BJ (cell line): ENCODE measurements at regions of chr18 and their contacts with region 1.

Region 1: GRCh38 chr18:45621061-45621511 is 5.8 kb downstream of the SLC14A2 start:
- DNase-seq: no peak
- H3K4me3 ChIP-seq: no peak overlapping the region
- H3K27me3 ChIP-seq: peaks cover 5% of the 10 kb centered on the region
- CTCF ChIP-seq: peak; percentile 98

Region 2: DNA sequence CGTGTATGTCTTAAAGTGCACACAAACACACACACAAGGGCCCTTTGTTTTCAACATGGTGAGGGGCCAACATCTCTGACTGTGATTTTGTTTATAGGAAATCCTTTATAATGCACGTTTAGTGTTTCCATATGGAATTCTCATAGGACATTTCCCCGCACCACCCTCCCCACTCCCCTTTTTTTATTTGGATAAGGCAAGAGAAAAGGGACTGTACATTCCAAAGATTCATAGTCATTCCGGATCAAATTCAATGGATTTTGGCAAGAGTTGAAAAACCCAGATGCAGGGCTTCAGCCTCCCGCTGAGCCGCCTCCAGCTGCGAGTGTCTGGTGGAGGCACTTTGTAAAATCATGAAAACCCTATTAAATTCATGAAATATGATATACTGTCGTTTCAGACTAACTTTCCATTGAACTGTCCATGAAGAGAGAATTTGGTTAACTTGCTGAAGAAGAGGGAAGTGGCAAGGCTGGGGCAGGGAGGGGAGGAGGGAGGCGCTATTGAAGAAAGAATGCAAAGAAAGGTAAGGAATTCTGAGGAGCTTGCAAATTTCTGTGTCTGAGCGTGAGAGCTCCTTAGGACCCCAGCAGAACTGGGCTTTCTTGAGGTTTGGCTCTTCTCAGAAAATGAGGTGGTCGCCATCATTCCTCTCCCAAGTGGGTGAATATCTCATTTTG is 31.6 kb before region 1 on chr18:
- CTCF ChIA-PET with region 1: interaction called, 11 read pairs
- POLR2A ChIA-PET with region 1: no interaction called
- DNase-seq: peak; percentile 85
- H3K4me3 ChIP-seq: no peak overlapping the region
- H3K27me3 ChIP-seq: peaks cover 2% of the 10 kb centered on the region
- CTCF ChIP-seq: no peak

Region 3: DNA sequence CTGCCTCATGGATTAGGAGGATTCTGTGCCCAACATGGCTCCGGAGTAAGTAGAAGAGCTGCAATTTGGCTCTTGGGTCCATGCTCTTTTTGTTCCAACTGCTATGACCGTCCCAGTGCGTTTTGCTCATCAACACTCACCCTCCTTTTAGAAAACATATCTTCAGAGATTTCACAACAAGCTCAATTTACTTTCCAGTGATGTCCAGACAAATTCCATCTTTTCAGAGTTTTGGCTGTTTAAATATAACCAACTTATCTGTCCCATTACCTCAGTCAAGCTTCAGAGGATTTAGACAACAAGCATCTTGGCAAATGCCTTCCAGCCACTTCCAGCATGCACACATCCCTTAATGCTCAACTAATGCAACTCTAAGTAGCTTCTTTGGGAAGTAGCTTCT is 12.7 kb before region 1 on chr18:
- CTCF ChIA-PET with region 1: interaction called, 35 read pairs
- POLR2A ChIA-PET with region 1: no interaction called
- DNase-seq: no peak
- H3K4me3 ChIP-seq: no peak overlapping the region
- H3K27me3 ChIP-seq: peaks cover 12% of the 10 kb centered on the region
- CTCF ChIP-seq: no peak

Region 4: GRCh38 chr18:45637546-45638327 is 16.7 kb after region 1 on chr18:
- CTCF ChIA-PET with region 1: interaction called, 19 read pairs
- POLR2A ChIA-PET with region 1: no interaction called
- DNase-seq: no peak
- H3K4me3 ChIP-seq: no peak overlapping the region
- H3K27me3 ChIP-seq: peaks cover 12% of the 10 kb centered on the region
- CTCF ChIP-seq: no peak

Region 5: GRCh38 chr18:45652303-45653080 is 31.4 kb after region 1 on chr18:
- CTCF ChIA-PET with region 1: interaction called, 91 read pairs
- POLR2A ChIA-PET with region 1: no interaction called
- DNase-seq: no peak
- H3K4me3 ChIP-seq: no peak overlapping the region
- H3K27me3 ChIP-seq: no peaks in the 10 kb centered on the region
- CTCF ChIP-seq: no peak

Region 6: GRCh38 chr18:45935591-45936335 is 314.7 kb after region 1 on chr18:
- CTCF ChIA-PET with region 1: no interaction called
- POLR2A ChIA-PET with region 1: no interaction called
- DNase-seq: no peak
- H3K4me3 ChIP-seq: no peak overlapping the region
- H3K27me3 ChIP-seq: no peaks in the 10 kb centered on the region
- CTCF ChIP-seq: no peak